ENCODE measurements at regions of chr16 and their contacts with region 1.

Region 1: DNA sequence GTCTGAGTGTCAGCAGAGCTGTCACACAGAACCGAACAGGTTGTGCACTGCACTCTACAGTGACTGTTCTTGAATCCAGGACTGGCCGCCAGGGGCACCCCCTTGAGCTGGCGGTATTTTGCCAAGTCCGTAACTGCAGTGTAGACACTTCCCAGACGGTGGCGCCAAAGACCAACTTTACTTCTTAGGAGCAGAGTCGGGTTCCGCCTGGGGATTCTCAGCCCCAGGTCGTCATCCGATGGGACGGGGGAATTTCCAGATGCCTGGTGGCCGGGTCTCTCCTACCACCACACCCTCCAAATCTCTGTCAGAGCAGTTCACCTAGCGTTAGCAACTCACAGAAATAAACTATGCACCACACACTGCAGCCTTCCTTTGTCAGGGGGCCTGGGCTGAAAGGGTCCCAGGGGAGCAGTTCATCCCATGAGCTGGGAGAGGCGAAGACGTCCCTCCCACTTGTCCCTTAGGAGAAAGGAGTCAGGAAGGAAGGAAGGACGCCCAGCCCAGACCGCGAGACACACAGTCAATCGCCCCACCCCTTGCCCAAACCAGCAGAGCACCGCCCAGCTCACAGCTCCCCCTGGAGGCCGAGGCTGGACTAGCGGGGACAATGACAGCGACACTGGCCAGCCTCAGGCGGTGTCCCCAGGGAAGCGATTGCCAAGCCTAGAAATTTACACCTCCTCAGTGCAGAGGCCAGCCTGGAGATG is 7.4 kb upstream of the RIPOR1 start:
- DNase-seq: peak; percentile 96
- ATAC-seq: peak; percentile 97

Region 2: GRCh38 chr16:67456391-67457081 is 64.7 kb before region 1 on chr16:
- intact Hi-C with region 1: no loop called
- DNase-seq: peak; percentile 88
- ATAC-seq: peak; percentile 57

Region 3: GRCh38 chr16:67667817-67668494 is 146.7 kb after region 1 on chr16:
- intact Hi-C with region 1: loop called (anchors 5 kb)
- DNase-seq: peak; percentile 91
- ATAC-seq: peak; percentile 89

Measured in Right ventricle myocardium superior (tissue), 1 donor.